Mammary epithelial cell (primary cell): ENCODE measurements at regions of chr5 and their contacts with region 1.

Region 1: GRCh38 chr5:119966028-119966427 is 336.7 kb downstream of the FAM170A start:
- DNase-seq: no peak
- H3K4me3 ChIP-seq: no peak overlapping the region
- H3K27ac ChIP-seq: no peak overlapping the region
- H3K4me1 ChIP-seq: no peaks in the 10 kb centered on the region
- H3K27me3 ChIP-seq: peaks cover 2% of the 10 kb centered on the region
- CTCF ChIP-seq: no peak

Region 2: DNA sequence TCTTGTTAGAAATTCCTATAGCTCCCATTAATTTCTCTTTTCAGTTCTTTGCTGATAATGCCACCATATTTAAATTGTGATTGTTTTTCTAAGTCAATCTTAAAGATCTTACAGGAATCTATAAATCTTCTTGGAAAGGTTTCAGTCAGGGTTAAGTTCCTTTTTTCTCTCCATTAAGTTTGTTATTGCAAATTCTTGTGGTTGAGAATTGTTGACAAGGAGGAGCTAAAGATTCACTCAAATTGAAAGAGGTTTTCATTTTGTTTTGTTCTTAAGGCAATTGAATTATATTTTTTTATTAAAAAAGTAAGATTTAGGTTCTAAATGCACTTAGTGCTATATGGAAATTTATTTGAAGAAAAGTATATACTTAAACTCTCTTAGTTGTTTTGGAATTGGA is 711.5 kb after region 1 on chr5:
- CTCF ChIA-PET with region 1: interaction called, 28 read pairs
- dilution Hi-C with region 1: no loop called
- in situ Hi-C with region 1: no loop called
- intact Hi-C with region 1: no loop called
- DNase-seq: no peak
- H3K4me3 ChIP-seq: no peak overlapping the region
- H3K27ac ChIP-seq: no peak overlapping the region
- H3K4me1 ChIP-seq: no peaks in the 10 kb centered on the region
- H3K27me3 ChIP-seq: no peaks in the 10 kb centered on the region
- CTCF ChIP-seq: no peak